PC-9 (cell line): ENCODE measurements at regions of chr2 and their contacts with region 1.

Region 1: GRCh38 chr2:233387667-233388528 is 33.6 kb downstream of the DGKD start:
- DNase-seq: peak in 1 of 2 experiments; percentile 31
- H3K4me3 ChIP-seq: no peak overlapping the region
- H3K27ac ChIP-seq: no peak overlapping the region
- H3K4me1 ChIP-seq: peaks cover 27% of the 10 kb centered on the region
- H3K27me3 ChIP-seq: no peaks in the 10 kb centered on the region
- CTCF ChIP-seq: no peak

Region 2: DNA sequence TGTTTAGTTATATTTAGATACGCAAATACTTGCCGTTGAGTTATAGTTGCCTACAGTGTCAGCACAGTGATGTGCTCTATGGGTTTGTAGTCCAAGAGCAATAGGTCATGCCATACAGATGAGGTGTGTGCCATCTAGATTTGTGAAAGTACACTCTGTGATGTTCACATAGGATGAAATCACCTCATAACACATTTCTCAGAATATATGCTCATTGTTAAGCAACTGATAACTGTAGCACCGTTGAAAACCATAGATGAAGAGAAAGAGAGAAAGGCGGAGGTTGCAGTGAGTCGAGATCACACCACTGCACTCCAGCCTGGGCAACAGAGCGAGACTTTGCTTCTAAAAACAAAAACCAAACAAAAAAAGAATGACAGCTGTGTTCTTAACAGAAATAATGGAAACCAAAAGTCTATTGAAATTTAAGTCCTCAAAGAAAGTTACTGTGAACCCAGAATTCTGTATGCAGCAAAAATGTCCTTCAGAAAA is 24.1 kb before region 1 on chr2:
- CTCF ChIA-PET with region 1: no interaction called
- POLR2A ChIA-PET with region 1: interaction called, 20 read pairs
- intact Hi-C with region 1: no loop called
- DNase-seq: no peak
- H3K4me3 ChIP-seq: no peak overlapping the region
- H3K27ac ChIP-seq: no peak overlapping the region
- H3K4me1 ChIP-seq: no peaks in the 10 kb centered on the region
- H3K27me3 ChIP-seq: no peaks in the 10 kb centered on the region
- CTCF ChIP-seq: no peak